ENCODE measurements at regions of chr21 and their contacts with region 1.

Region 1: GRCh38 chr21:33761441-33762036 is 119.2 kb downstream of the ITSN1 start:
- DNase-seq: peak in 1 of 2 donors; percentile 34
- ATAC-seq: peak; percentile 80 to 96 (median 94)
- H3K4me3 ChIP-seq: peak overlapping the region in 6 of 10 donors; percentile 0 to 22 (median 10)
- H3K27ac ChIP-seq: peak overlapping the region in 9 of 10 donors; percentile 20 to 82 (median 62)
- H3K4me1 ChIP-seq: peaks cover 0 to 29% (median 14%) of the 10 kb centered on the region in 9 donors
- H3K27me3 ChIP-seq: no peaks in the 10 kb centered on the region
- CTCF ChIP-seq: no peak

Region 2: GRCh38 chr21:33734291-33734690 is 27.2 kb before region 1 on chr21:
- intact Hi-C with region 1: loop called in 1 of 10 experiments (anchors 1 kb)
- DNase-seq: no peak
- ATAC-seq: no peak
- H3K4me3 ChIP-seq: no peak overlapping the region
- H3K27ac ChIP-seq: no peak overlapping the region
- H3K4me1 ChIP-seq: peaks cover 0 to 2% (median 0%) of the 10 kb centered on the region in 9 donors
- H3K27me3 ChIP-seq: no peaks in the 10 kb centered on the region
- CTCF ChIP-seq: no peak

Region 3: GRCh38 chr21:33825915-33826314 is 64.4 kb after region 1 on chr21:
- intact Hi-C with region 1: no loop called
- DNase-seq: no peak
- ATAC-seq: peak in 1 of 8 donors; percentile 34
- H3K4me3 ChIP-seq: no peak overlapping the region
- H3K27ac ChIP-seq: peak overlapping the region in 3 of 10 donors; percentile 17 to 61 (median 25)
- H3K4me1 ChIP-seq: peaks cover 0 to 39% (median 16%) of the 10 kb centered on the region in 9 donors
- H3K27me3 ChIP-seq: no peaks in the 10 kb centered on the region
- CTCF ChIP-seq: no peak

Region 4: DNA sequence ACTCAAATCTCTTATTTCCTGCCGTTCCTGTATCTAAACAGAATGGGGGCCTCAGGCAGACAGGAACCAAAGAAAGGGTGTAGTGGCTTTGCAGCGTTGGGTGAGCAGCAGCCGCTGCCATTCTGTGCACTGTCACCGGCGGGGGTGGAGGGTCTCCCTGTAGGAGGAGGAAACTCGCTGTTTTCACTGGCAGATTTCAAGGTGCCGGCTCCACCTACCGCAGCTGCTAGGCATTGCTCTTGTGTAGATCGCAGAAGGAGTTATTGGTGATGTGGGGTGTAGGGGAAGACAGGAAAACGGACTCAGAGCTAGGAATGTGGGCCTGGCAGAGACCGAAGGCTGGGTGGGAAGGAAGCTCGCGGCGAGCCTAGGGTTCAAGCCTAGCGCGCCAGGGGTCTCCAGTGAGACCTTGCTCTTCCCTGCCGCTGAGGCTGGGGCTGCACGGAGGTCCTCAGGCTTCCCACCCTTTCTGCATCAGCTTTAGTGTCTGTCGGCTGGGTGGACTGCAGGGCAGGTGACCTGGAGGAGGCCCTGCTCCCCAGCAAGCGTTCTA is 133.3 kb after region 1 on chr21:
- intact Hi-C with region 1: loop called in 1 of 10 experiments (anchors 10 kb)
- DNase-seq: peak; percentile 73 to 81
- ATAC-seq: peak; percentile 79 to 94 (median 92)
- H3K4me3 ChIP-seq: peak overlapping the region in 8 of 10 donors; percentile 27 to 51 (median 38)
- H3K27ac ChIP-seq: peak overlapping the region in 1 of 10 donors; percentile 13
- H3K4me1 ChIP-seq: peaks cover 0 to 18% (median 8%) of the 10 kb centered on the region in 9 donors
- H3K27me3 ChIP-seq: no peaks in the 10 kb centered on the region
- CTCF ChIP-seq: peak; percentile 27 to 76 (median 61)